SK-N-SH (cell line): ENCODE measurements at regions of chr1 and their contacts with region 1.

Region 1: GRCh38 chr1:115609021-115609420 is 32.7 kb upstream of the VANGL1 start:
- DNase-seq: no peak
- H3K4me3 ChIP-seq: no peak overlapping the region
- H3K27ac ChIP-seq: no peak overlapping the region
- H3K4me1 ChIP-seq: no peaks in the 10 kb centered on the region
- H3K27me3 ChIP-seq: peaks cover 16% of the 10 kb centered on the region; the same call in 1 of the 2 replicates
- CTCF ChIP-seq: no peak
- EP300 ChIP-seq: no peak
- RAD21 ChIP-seq: no peak

Region 2: DNA sequence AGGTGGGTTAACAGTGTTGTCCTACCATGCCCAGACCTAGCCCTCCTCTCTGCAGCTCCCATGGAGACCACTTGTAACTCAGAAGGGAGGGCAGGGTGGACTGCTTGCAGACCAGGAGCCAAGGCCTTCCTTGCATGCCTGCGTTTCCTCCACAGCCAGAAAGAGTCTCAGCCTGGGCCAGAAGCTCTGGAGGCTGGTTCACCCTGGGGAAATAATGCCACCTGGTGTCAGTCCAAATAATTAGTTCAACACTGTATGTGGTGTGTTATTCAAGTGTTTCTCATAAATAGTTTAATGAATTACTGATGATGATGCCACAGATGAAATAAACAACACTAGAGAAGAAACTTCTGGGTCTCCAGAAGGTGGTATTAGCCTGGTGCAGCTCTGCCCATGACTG is 15.8 kb after region 1 on chr1:
- CTCF ChIA-PET with region 1: interaction called, 10 read pairs
- POLR2A ChIA-PET with region 1: no interaction called
- DNase-seq: no peak
- H3K4me3 ChIP-seq: no peak overlapping the region
- H3K27ac ChIP-seq: no peak overlapping the region
- H3K4me1 ChIP-seq: peaks cover 0 to 2% of the 10 kb centered on the region in 2 experiments; a peak in 1 of 4 replicates
- H3K27me3 ChIP-seq: no peaks in the 10 kb centered on the region
- CTCF ChIP-seq: no peak
- EP300 ChIP-seq: no peak
- RAD21 ChIP-seq: no peak

Region 3: GRCh38 chr1:115642168-115643072 is 33.4 kb after region 1 on chr1:
- CTCF ChIA-PET with region 1: interaction called, 12 read pairs
- POLR2A ChIA-PET with region 1: no interaction called
- DNase-seq: peak; percentile 83
- H3K4me3 ChIP-seq: peak overlapping the region; percentile 94 to 97
- H3K27ac ChIP-seq: peak overlapping the region; percentile 27 to 70
- H3K4me1 ChIP-seq: peaks cover 7% of the 10 kb centered on the region in 2 experiments; a peak in 3 of 4 replicates
- H3K27me3 ChIP-seq: no peaks in the 10 kb centered on the region
- CTCF ChIP-seq: 0 out of 2 replicates have a peak, but pooled peaks have one; percentile 14
- EP300 ChIP-seq: no peak
- RAD21 ChIP-seq: no peak

Region 4: DNA sequence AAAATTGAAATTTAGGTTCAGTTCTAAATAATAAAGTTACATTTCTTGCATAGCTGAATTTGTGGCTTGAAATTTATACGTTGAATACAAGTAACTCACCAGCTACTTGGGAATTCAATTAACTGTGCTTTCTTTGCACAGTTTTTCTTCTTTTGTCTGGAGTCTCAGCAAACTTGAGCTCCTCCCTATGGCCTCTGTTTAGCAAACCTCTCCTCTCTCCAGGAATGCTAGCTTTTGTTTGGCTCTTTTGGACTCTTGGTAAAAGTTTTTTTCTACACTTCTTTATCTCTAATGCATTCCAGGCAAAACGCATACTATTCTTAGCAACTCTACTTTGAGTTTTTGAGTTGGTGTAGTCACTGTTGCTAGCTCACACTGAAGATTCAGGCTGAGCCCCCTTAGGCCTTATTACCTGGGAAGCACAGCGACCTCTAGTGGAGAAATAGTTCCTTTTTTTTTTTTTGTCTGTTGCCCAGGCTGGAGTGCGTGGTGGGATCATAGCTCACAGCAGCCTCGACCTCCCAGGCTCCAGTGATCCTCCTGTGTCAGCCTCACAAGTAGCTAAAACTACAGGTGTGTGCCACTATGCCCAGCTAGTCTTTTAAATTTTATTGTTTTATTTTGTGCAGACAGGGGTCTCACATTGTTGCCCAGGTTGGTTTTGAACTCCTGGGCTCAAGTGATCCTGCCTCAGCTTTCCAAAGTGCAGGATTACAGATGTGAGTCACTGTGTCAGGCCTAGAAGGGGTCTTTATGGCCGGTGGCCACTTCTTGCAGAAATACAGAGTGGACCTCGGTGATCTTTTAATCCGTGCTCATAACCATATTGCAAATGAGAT is 97.8 kb after region 1 on chr1:
- CTCF ChIA-PET with region 1: interaction called, 55 read pairs
- POLR2A ChIA-PET with region 1: no interaction called
- DNase-seq: peak; percentile 45
- H3K4me3 ChIP-seq: no peak overlapping the region; a peak in 1 of 4 replicates
- H3K27ac ChIP-seq: no peak overlapping the region
- H3K4me1 ChIP-seq: no peaks in the 10 kb centered on the region; a peak in 1 of 4 replicates
- H3K27me3 ChIP-seq: no peaks in the 10 kb centered on the region; the same call in 1 of the 2 replicates
- CTCF ChIP-seq: peak; percentile 76
- EP300 ChIP-seq: no peak
- RAD21 ChIP-seq: peak; percentile 47

Region 5: GRCh38 chr1:115764541-115764940 is 155.5 kb after region 1 on chr1:
- CTCF ChIA-PET with region 1: interaction called, 106 read pairs
- POLR2A ChIA-PET with region 1: interaction called, 4 read pairs
- DNase-seq: peak; percentile 45
- H3K4me3 ChIP-seq: no peak overlapping the region
- H3K27ac ChIP-seq: no peak overlapping the region
- H3K4me1 ChIP-seq: no peaks in the 10 kb centered on the region
- H3K27me3 ChIP-seq: no peaks in the 10 kb centered on the region; the same call in 1 of the 2 replicates
- CTCF ChIP-seq: peak; percentile 52
- EP300 ChIP-seq: no peak
- RAD21 ChIP-seq: peak; percentile 67

Region 6: GRCh38 chr1:115771847-115772457 is 162.9 kb after region 1 on chr1:
- CTCF ChIA-PET with region 1: interaction called, 106 read pairs
- POLR2A ChIA-PET with region 1: no interaction called
- DNase-seq: peak; percentile 68
- H3K4me3 ChIP-seq: no peak overlapping the region; a peak in 1 of 4 replicates
- H3K27ac ChIP-seq: no peak overlapping the region
- H3K4me1 ChIP-seq: peaks cover 0 to 4% of the 10 kb centered on the region in 2 experiments; a peak in 1 of 4 replicates
- H3K27me3 ChIP-seq: no peaks in the 10 kb centered on the region; the same call in 1 of the 2 replicates
- CTCF ChIP-seq: peak; percentile 74
- EP300 ChIP-seq: no peak
- RAD21 ChIP-seq: peak; percentile 93

Region 7: GRCh38 chr1:115782571-115783281 is 173.7 kb after region 1 on chr1:
- CTCF ChIA-PET with region 1: interaction called, 20 read pairs
- POLR2A ChIA-PET with region 1: no interaction called
- DNase-seq: no peak
- H3K4me3 ChIP-seq: no peak overlapping the region
- H3K27ac ChIP-seq: no peak overlapping the region
- H3K4me1 ChIP-seq: no peaks in the 10 kb centered on the region
- H3K27me3 ChIP-seq: peaks cover 3% of the 10 kb centered on the region; the same call in 1 of the 2 replicates
- CTCF ChIP-seq: no peak
- EP300 ChIP-seq: no peak
- RAD21 ChIP-seq: no peak